Right ventricle myocardium inferior (tissue), 1 donor: ENCODE measurements at regions of chr17 and their contacts with region 1.

Region 1: GRCh38 chr17:35804658-35805192 is 4.6 kb upstream of the TAF15 start:
- DNase-seq: no peak
- ATAC-seq: peak; percentile 66

Region 2: DNA sequence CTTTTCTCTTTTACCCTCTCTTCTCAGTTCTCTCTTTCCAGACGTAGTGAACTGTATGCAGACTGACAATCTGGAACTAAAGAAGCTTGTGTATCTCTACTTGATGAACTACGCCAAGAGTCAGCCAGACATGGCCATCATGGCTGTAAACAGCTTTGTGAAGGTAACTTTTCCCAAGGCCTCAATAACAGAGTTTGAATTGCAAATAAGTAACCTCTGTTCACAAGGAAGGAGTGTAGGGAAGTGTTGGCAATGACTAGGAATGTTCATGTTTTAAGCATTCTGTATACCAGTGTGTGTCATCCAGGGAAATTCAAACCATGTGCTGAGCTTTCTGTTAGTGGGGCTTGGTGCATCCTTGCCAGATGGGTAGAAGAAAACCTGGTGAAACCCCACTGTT is 199.0 kb before region 1 on chr17:
- intact Hi-C with region 1: no loop called
- DNase-seq: no peak
- ATAC-seq: no peak

Region 3: GRCh38 chr17:35764123-35764991 is 40.4 kb before region 1 on chr17:
- intact Hi-C with region 1: loop called (anchors 1 kb)
- DNase-seq: peak; percentile 95
- ATAC-seq: peak; percentile 98

Region 4: GRCh38 chr17:35788504-35789368 is 16.0 kb before region 1 on chr17:
- intact Hi-C with region 1: loop called (anchors 2 kb)
- DNase-seq: no peak
- ATAC-seq: peak; percentile 63